ENCODE measurements at regions of chr2 and their contacts with region 1.

Region 1: DNA sequence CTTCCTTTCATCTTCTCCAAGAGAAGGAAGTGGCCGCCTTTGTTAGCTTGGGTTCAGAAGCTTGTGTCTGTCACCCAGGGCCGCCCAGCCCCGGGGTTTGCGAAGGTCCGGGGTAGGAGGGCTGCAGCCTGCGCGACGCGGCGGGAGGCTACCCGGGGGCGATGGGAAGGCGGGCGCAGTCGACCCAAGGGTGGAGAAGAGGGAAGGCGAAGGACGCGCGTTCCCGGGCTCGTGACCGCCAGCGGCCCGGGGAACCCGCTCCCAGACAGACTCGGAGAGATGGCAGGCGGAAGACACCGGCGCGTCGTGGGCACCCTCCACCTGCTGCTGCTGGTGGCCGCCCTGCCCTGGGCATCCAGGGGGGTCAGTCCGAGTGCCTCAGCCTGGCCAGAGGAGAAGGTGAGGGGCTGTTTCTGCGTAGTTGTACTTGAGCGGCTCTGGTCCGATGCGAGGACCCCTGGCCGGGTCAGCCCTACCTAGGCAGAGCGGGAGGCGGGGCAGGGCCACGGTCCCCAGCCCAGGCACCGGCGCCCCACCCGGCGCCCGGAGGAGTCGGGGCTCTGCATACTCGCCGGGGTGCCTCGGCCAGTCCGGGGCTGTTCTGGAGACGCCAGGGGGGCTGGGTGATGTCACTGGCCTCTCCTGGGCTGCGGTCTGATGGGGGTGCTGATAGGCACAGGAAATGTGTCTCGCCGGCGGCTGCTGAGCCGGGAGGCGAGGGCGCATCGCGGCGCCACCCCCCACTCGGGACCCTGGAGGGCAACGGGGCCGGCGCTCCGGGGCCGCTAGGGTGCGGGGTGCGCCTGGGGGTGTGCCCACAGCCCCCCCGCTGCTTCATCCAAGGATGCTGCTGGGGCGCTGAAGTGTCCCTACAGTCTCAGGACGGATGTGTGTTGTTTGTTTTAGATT is at the start of gene QPCT:
- DNase-seq: peak; percentile 63
- H3K4me3 Mint-ChIP-seq: peak within 1 kb of the TSS; percentile 74
- H3K27ac Mint-ChIP-seq: no peak within 1 kb of the TSS
- H3K4me1 Mint-ChIP-seq: peaks cover 21% of the 10 kb centered on the region
- H3K27me3 Mint-ChIP-seq: peaks cover 30% of the 10 kb centered on the region
- total RNA-seq, gene QPCT: 0.43 to 0.68 TPM

Region 2: DNA sequence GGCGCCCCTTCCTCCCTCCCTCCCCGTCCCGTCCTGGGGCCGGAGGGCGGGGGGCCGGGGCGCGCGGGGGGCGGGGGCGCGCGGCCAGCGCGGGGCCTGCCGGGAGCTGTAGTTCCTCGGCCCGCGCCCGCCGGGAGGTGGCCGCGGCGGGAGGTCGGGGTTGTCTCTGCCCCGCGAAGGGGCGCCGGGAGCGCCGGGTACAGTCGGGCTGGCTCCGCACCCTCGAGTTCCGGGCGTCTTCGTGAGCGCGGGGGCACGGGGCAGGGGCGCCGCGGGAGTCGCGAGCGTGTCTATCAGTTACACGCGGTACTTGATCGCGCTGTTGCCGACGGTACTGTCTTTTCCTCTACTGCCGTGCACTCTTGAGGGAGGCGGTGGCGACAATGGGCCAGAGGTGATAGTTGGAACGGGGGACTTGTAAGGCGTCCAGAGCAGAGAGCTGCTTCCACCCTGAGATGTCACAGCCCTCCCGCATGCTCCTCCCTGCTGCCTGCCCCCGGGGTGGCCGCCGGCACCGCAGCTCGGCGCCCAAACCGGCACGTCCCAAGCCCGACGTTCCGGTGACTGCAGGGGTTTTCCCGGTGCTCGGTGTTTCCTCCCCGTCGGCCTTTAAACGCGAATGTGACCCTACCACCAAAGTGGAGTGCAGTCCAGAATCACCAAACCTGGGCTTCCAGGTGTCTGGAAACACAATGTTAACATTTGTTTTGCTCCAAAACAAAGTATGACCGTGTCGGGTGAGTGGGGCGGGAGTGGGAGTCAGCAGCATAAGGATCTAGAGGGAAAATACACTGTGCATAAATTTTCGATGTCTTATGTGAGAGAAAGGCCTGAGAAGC is 19.7 kb before region 1 on chr2 and contains the start of gene PRKD3:
- CTCF ChIA-PET with region 1: no interaction called
- POLR2A ChIA-PET with region 1: no interaction called
- intact Hi-C with region 1: loop called (anchors 2 kb)
- DNase-seq: peak; percentile 77
- H3K4me3 Mint-ChIP-seq: peak within 1 kb of the TSS; percentile 94
- H3K27ac Mint-ChIP-seq: peak within 1 kb of the TSS; percentile 89
- H3K4me1 Mint-ChIP-seq: peaks cover 37% of the 10 kb centered on the region
- H3K27me3 Mint-ChIP-seq: peaks cover 16% of the 10 kb centered on the region
- total RNA-seq, gene PRKD3: 22.5 to 24.7 TPM